Caco-2 (cell line): ENCODE measurements at regions of chr1 and their contacts with region 1.

Region 1: DNA sequence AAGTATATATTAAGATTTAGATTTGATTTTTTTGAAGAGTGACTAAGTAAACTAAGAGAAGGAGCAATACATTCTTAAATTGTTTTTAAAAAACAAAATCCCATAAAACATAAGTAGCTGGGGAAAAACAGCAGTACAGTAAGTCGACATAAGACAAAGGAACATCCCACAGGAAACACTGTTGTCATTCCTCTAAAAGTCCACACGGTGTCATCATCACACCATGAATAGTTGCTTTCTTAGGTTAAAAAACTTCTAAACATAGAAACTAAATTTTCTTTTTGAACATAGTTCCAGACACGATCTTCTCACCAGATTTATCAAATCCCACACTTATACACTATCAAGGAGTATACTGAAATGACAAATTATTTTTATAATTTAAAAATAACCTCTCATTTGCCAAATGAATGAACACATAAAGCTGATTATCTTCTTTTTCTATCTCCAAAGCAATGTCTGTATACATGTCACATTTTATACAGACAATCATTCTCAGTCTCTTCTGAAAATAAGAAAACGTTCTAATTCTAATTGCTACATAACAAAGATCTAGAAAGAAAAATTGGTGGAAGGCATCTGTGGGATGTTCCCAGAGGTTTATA is 15.8 kb downstream of the ODF2L start:
- DNase-seq: peak in 1 of 2 experiments; percentile 4
- H3K4me3 ChIP-seq: no peak overlapping the region
- H3K4me3 Mint-ChIP-seq: no peak overlapping the region
- H3K27ac Mint-ChIP-seq: no peak overlapping the region
- H3K4me1 ChIP-seq: no peaks in the 10 kb centered on the region
- H3K4me1 Mint-ChIP-seq: no peaks in the 10 kb centered on the region
- H3K27me3 ChIP-seq: no peaks in the 10 kb centered on the region
- H3K27me3 Mint-ChIP-seq: no peaks in the 10 kb centered on the region
- CTCF ChIP-seq: peak; percentile 47 to 52

Region 2: DNA sequence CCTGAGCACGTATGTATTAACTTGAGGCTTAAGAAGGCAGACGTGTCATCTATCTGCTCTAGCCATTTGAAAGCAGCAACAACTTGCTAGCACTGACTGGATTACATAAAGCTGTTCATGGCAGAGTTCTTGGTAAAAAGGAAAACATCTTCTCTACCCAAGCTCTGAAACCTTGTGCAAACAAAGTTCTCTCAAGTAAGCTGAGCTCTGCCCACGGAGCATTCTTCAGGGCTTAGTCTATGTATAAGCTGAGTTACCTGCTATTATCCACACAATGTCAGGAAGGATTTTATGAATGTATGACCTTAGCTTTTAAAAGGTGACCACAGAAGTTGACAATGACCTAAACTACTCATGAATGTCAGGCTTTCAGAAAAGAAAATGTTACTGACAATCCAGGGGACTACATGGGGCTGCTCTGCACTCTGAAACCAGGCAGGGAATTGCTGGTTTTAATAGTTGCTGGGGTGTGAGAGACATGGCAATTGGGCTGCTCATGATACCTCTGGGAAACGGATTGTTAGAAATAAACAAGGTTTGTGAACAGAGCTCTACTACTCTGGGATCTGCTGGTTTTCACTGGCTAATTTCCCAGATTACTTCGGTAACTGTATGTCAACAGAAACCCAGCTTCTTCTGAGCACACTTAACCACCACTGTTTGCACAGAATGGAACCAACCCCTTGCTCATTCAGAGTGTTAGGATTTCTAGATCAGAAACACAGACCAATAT is 829.4 kb before region 1 on chr1:
- CTCF ChIA-PET with region 1: no interaction called
- POLR2A ChIA-PET with region 1: no interaction called
- intact Hi-C with region 1: no loop called
- DNase-seq: peak in 1 of 2 experiments; percentile 32
- H3K4me3 ChIP-seq: no peak overlapping the region
- H3K4me3 Mint-ChIP-seq: peak overlapping the region; percentile 23
- H3K27ac Mint-ChIP-seq: peak overlapping the region; percentile 50
- H3K4me1 ChIP-seq: peaks cover 19% of the 10 kb centered on the region
- H3K4me1 Mint-ChIP-seq: peaks cover 24% of the 10 kb centered on the region
- H3K27me3 ChIP-seq: no peaks in the 10 kb centered on the region
- H3K27me3 Mint-ChIP-seq: no peaks in the 10 kb centered on the region
- CTCF ChIP-seq: no peak

Region 3: GRCh38 chr1:86650065-86650464 is 269.7 kb after region 1 on chr1:
- CTCF ChIA-PET with region 1: interaction called, 4 read pairs
- POLR2A ChIA-PET with region 1: no interaction called
- intact Hi-C with region 1: loop called (anchors 5 kb)
- DNase-seq: peak in 1 of 2 experiments; percentile 9
- H3K4me3 ChIP-seq: no peak overlapping the region
- H3K4me3 Mint-ChIP-seq: no peak overlapping the region
- H3K27ac Mint-ChIP-seq: no peak overlapping the region
- H3K4me1 ChIP-seq: no peaks in the 10 kb centered on the region
- H3K4me1 Mint-ChIP-seq: peaks cover 4% of the 10 kb centered on the region
- H3K27me3 ChIP-seq: no peaks in the 10 kb centered on the region
- H3K27me3 Mint-ChIP-seq: no peaks in the 10 kb centered on the region
- CTCF ChIP-seq: peak in 1 of 2 experiments; percentile 17

Region 4: DNA sequence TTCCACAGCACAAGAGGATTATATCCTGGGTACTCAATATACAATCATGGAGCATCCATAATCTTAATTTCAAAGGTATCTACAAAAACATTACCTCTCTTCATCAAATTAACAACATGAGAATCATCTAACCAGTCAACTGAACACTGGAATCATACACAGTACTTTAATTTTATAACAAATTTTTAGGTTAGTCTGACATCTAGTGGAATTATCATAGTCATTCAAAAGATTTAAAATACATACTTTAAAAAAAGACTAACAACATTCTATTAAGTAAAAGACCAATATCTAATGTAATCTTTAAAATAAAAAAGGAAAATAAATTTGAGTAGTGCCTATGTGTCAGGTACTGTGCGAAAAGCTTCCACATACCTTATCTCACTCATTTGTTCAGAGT is 307.2 kb after region 1 on chr1:
- CTCF ChIA-PET with region 1: no interaction called
- POLR2A ChIA-PET with region 1: no interaction called
- intact Hi-C with region 1: loop called (anchors 10 kb)
- DNase-seq: no peak
- H3K4me3 ChIP-seq: no peak overlapping the region
- H3K4me3 Mint-ChIP-seq: no peak overlapping the region
- H3K27ac Mint-ChIP-seq: no peak overlapping the region
- H3K4me1 ChIP-seq: no peaks in the 10 kb centered on the region
- H3K4me1 Mint-ChIP-seq: peaks cover 6% of the 10 kb centered on the region
- H3K27me3 ChIP-seq: no peaks in the 10 kb centered on the region
- H3K27me3 Mint-ChIP-seq: no peaks in the 10 kb centered on the region
- CTCF ChIP-seq: no peak

Region 5: GRCh38 chr1:86741947-86742572 is 361.7 kb after region 1 on chr1:
- CTCF ChIA-PET with region 1: no interaction called
- POLR2A ChIA-PET with region 1: no interaction called
- intact Hi-C with region 1: loop called (anchors 5 kb)
- DNase-seq: peak in 1 of 2 experiments; percentile 24
- H3K4me3 ChIP-seq: no peak overlapping the region
- H3K4me3 Mint-ChIP-seq: no peak overlapping the region
- H3K27ac Mint-ChIP-seq: no peak overlapping the region
- H3K4me1 ChIP-seq: peaks cover 14% of the 10 kb centered on the region; the same call in 1 of the 2 replicates
- H3K4me1 Mint-ChIP-seq: peaks cover 13% of the 10 kb centered on the region
- H3K27me3 ChIP-seq: no peaks in the 10 kb centered on the region
- H3K27me3 Mint-ChIP-seq: no peaks in the 10 kb centered on the region
- CTCF ChIP-seq: peak in 1 of 2 experiments; percentile 35

Region 6: DNA sequence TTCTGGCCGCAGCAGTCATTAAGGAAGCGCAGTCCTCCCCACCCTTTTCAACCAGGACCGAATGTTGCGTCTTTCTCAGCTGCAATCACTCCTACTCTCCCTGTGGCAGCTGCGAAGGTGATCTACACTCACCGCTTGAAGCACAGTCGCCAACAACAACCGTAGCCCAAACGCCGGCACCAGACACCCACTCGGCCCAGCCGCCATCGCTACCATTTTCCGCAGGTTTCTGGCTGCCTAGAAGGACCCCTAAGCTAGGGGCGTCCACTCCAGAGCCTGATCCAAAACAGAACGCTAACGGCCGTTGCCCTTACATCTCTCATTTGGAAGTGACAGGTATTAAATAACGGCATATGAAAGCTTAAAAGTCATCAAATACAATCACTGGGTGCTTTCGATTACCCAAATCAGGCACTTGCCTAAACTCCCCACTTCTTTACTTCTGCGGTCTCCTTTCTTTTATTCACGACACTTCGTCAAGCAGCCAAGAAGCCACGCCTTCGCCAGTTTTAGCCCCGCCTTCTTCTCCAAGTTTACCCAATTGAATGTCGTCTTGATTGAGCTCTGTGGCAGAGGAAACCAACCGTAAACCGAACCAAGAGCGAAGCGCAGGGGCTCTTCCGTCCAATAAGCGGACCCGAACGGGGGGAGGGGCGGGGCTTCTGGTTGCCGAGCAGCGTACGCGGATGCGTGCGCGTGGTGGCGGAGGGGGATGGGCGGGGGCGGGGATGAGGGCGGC is 533.7 kb after region 1 on chr1 and contains the start of gene SELENOF:
- CTCF ChIA-PET with region 1: no interaction called
- POLR2A ChIA-PET with region 1: no interaction called
- intact Hi-C with region 1: loop called (anchors 10 kb)
- DNase-seq: peak; percentile 96 to 98
- H3K4me3 ChIP-seq: peak within 1 kb of the TSS; percentile 92
- H3K4me3 Mint-ChIP-seq: no peak within 1 kb of the TSS
- H3K27ac Mint-ChIP-seq: no peak within 1 kb of the TSS
- H3K4me1 ChIP-seq: no peaks in the 10 kb centered on the region; the same call in none of the 2 replicates
- H3K4me1 Mint-ChIP-seq: peaks cover 11% of the 10 kb centered on the region
- H3K27me3 ChIP-seq: no peaks in the 10 kb centered on the region
- H3K27me3 Mint-ChIP-seq: no peaks in the 10 kb centered on the region
- CTCF ChIP-seq: no peak
- total RNA-seq, gene SELENOF: 161 and 166 TPM in 2 replicates